ENCODE measurements at regions of chr15 and their contacts with region 1.

Region 1: DNA sequence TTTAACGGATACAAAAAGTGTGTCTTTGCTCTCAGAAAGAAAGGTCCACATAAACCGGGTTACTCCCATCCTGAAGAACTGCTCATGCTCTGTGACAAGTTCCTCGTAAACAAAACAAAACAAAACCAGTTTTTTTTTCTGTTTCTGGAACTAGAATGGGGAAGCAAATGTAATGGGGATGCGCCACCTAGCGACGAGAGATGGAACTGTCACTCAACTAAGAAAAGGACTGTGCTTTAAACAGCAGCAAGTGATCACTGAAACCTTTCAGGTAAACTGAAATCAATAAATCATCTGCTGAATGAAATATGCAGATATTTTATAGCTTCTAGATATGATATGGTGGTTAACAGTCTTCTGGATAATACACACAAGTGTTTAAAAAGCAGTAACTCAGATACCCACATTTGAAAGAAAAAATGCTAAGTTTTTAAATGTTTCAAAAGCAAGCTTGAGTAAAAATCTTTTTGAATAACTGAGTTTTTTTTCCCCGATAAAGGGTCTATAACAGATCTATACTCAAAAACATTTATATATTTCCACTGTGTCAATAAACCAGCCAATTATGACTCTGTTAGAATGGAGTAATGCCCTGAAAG is 10.9 kb downstream of the TM2D3 start:
- DNase-seq: peak; percentile 53 to 71
- H3K4me3 ChIP-seq: no peak overlapping the region
- H3K27ac ChIP-seq: peak overlapping the region; percentile 29 to 34
- H3K4me1 ChIP-seq: no peaks in the 10 kb centered on the region
- H3K27me3 ChIP-seq: no peaks in the 10 kb centered on the region
- CTCF ChIP-seq: peak; percentile 83 to 89 (median 88)
- POLR2A ChIP-seq: no peak

Region 2: GRCh38 chr15:101307048-101307896 is 334.0 kb before region 1 on chr15:
- intact Hi-C with region 1: loop called (anchors 10 kb)
- DNase-seq: no peak
- H3K4me3 ChIP-seq: no peak overlapping the region
- H3K27ac ChIP-seq: no peak overlapping the region
- H3K4me1 ChIP-seq: no peaks in the 10 kb centered on the region
- H3K27me3 ChIP-seq: no peaks in the 10 kb centered on the region
- CTCF ChIP-seq: no peak
- POLR2A ChIP-seq: no peak

Region 3: GRCh38 chr15:101348643-101349548 is 292.4 kb before region 1 on chr15:
- intact Hi-C with region 1: no loop called
- DNase-seq: peak in 1 of 2 donors; percentile 48
- H3K4me3 ChIP-seq: no peak overlapping the region
- H3K27ac ChIP-seq: peak overlapping the region in 1 of 2 donors; percentile 67
- H3K4me1 ChIP-seq: no peaks in the 10 kb centered on the region
- H3K27me3 ChIP-seq: no peaks in the 10 kb centered on the region
- CTCF ChIP-seq: no peak
- POLR2A ChIP-seq: no peak

Region 4: GRCh38 chr15:101489236-101489632 is 152.0 kb before region 1 on chr15:
- intact Hi-C with region 1: no loop called
- DNase-seq: no peak
- H3K4me3 ChIP-seq: peak overlapping the region; percentile 20 to 67 (median 46)
- H3K27ac ChIP-seq: no peak overlapping the region
- H3K4me1 ChIP-seq: no peaks in the 10 kb centered on the region
- H3K27me3 ChIP-seq: peaks cover 4 to 14% of the 10 kb centered on the region in 2 donors
- CTCF ChIP-seq: no peak
- POLR2A ChIP-seq: no peak